CD4-positive, alpha-beta T cell (primary cell): ENCODE measurements at regions of chr19 and their contacts with region 1.

Region 1: DNA sequence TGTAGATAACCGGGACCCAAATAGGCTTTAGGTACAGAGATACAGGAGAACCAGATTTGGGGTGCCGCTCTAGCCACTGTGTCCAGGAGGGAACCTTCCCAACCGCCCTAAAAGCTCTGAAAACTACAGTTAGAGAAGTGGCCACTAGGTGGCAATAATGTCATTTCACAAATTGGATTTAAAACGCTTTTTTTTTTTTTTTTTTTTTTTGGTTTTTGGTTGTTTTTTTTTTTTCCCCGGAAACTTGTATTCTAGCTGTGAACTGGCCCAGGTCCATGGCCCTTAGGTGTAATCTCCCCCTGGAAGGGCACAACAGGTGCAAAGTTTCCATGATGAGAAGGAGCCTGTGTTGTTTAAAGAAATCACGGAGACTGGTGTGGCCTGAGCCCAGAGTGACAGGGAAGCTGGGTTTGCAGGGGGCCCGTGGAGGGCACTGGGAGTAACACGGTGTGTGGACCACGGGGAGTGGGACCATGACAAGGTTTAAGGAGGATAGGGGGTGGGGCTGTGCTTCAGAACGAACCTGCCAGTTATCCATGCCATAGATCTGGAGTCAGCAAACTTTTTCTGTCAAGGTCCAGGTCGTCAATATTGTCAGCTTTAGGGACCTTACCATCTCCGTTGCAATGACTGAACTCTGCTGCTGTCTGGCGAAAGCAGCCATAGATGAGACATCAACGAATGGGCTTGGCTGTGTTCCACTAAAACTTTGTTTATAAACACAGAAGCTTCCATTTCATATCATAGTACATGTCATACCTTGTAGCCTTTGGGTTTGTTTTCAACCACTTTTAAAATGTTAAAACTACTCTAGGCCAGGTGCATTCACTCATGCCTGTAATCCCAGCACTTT is 10.1 kb downstream of the OR1I1 start:
- DNase-seq: peak in 13 of 14 experiments; percentile 9 to 86 (median 37)
- ATAC-seq: peak; percentile 73
- H3K4me3 ChIP-seq: no peak overlapping the region
- H3K4me3 Mint-ChIP-seq: peak overlapping the region; percentile 13
- H3K27ac ChIP-seq: no peak overlapping the region
- H3K27ac Mint-ChIP-seq: peak overlapping the region; percentile 56
- H3K4me1 ChIP-seq: peaks cover 8% of the 10 kb centered on the region
- H3K4me1 Mint-ChIP-seq: peaks cover 8% of the 10 kb centered on the region
- H3K27me3 ChIP-seq: peaks cover 0 to 13% of the 10 kb centered on the region in 2 experiments
- H3K27me3 Mint-ChIP-seq: peaks cover 10% of the 10 kb centered on the region
- CTCF ChIP-seq: peak; percentile 78

Region 2: DNA sequence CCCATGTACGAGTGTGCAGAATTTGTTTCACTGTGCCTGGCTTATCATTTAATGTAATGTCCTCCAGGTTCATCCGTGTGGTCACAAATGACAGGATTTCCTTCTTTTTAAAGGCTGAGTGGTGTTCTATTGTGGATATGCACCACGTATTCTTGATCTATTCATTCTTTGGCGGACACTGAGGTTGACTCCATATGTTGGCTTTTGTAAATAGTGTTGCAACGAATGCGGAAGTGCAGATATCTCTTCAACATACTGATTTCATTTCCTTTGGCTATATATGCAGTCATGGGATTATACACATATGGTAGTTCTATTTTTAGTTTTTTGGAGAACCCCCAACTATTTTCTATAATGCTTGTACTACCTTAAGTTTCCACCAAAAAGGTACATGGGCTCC is 270.2 kb before region 1 on chr19:
- CTCF ChIA-PET with region 1: no interaction called
- POLR2A ChIA-PET with region 1: no interaction called
- intact Hi-C with region 1: no loop called
- DNase-seq: no peak
- ATAC-seq: no peak
- H3K4me3 ChIP-seq: no peak overlapping the region
- H3K4me3 Mint-ChIP-seq: no peak overlapping the region
- H3K27ac ChIP-seq: no peak overlapping the region
- H3K27ac Mint-ChIP-seq: no peak overlapping the region
- H3K4me1 ChIP-seq: no peaks in the 10 kb centered on the region
- H3K4me1 Mint-ChIP-seq: no peaks in the 10 kb centered on the region
- H3K27me3 ChIP-seq: peaks cover 7 to 18% of the 10 kb centered on the region in 2 experiments
- H3K27me3 Mint-ChIP-seq: peaks cover 55% of the 10 kb centered on the region
- CTCF ChIP-seq: no peak

Region 3: DNA sequence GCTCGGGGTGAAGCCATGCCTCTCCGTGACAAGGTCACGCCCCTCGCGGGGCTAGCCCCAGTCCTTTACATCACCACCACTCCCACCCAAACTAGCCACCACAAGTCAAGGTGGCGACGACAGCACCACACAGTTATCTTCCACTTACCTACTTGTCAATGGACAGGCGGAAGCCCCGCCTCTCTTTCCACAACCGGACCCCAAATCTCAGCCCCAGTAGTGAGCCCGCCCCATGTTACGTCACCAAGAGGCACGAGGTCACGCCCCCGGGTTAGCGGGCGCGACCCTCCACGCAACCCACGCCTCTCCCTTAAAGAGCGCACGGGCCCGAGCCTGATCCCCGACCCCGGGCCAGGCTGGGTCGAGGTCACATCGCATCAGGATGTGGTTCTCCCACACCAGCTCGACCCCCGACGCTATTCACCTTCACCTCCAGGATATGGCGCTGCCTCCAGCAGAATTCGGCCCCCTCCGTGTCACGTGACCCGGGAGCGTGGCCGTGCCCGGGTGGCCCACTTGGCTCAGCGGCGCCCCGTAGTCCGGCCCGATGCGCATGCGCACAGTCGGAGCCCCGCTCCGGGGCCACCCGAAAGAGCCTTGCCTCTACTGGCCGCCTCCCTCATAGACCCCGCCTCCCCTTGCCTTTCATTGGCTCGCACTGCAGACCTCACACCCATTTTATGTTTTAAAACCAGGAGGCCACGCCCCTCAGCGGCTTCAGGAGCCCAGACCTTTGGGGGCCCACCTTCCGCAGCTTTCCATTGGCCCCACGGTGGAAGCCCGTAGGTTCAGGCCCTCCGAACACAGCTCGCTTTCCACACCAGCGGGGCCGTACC is 33.3 kb after region 1 on chr19:
- CTCF ChIA-PET with region 1: interaction called, 8 read pairs
- POLR2A ChIA-PET with region 1: no interaction called
- intact Hi-C with region 1: loop called in 1 of 2 experiments (anchors 1 kb)
- DNase-seq: peak; percentile 92 to 98 (median 96)
- ATAC-seq: peak; percentile 85
- H3K4me3 ChIP-seq: peak overlapping the region; percentile 77
- H3K4me3 Mint-ChIP-seq: peak overlapping the region; percentile 99
- H3K27ac ChIP-seq: peak overlapping the region; percentile 87 to 97
- H3K27ac Mint-ChIP-seq: peak overlapping the region; percentile 96
- H3K4me1 ChIP-seq: peaks cover 32% of the 10 kb centered on the region
- H3K4me1 Mint-ChIP-seq: peaks cover 49% of the 10 kb centered on the region
- H3K27me3 ChIP-seq: no peaks in the 10 kb centered on the region
- H3K27me3 Mint-ChIP-seq: no peaks in the 10 kb centered on the region
- CTCF ChIP-seq: no peak

Region 4: DNA sequence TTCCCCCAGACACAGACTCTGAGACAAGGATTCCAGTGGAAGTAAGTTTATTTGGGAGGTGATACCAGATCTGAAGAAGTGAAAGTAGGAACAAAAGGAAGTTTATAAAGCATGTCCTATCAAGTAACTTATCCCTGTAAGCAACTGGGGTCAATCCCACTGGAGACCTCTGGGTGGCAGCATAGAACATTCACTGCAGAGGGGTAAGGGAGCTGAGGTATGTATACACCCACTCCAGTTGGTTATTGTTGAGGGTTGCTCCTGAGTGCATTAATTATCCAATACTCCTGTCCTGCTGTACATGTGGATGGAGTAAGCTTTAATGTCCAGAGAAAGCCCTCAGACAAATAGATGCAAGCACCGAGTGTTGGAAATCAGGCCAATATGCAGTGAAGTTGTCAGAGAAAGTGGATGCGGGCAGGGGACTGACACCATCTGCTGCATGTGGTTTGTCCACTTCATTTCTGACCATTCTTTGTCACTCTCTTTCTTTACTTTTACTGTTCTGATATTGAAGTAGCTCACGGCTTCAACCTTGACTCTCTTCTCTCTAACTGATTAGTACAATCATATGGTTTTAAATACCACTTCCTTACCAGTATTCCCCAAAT is 62.0 kb after region 1 on chr19:
- CTCF ChIA-PET with region 1: interaction called, 13 read pairs
- POLR2A ChIA-PET with region 1: no interaction called
- intact Hi-C with region 1: loop called (anchors 1 kb)
- DNase-seq: peak in 7 of 14 experiments; percentile 12 to 47 (median 33)
- ATAC-seq: peak; percentile 52
- H3K4me3 ChIP-seq: no peak overlapping the region
- H3K4me3 Mint-ChIP-seq: no peak overlapping the region
- H3K27ac ChIP-seq: no peak overlapping the region
- H3K27ac Mint-ChIP-seq: no peak overlapping the region
- H3K4me1 ChIP-seq: no peaks in the 10 kb centered on the region
- H3K4me1 Mint-ChIP-seq: peaks cover 6% of the 10 kb centered on the region
- H3K27me3 ChIP-seq: peaks cover 0 to 5% of the 10 kb centered on the region in 2 experiments
- H3K27me3 Mint-ChIP-seq: peaks cover 17% of the 10 kb centered on the region
- CTCF ChIP-seq: peak; percentile 47

Region 5: DNA sequence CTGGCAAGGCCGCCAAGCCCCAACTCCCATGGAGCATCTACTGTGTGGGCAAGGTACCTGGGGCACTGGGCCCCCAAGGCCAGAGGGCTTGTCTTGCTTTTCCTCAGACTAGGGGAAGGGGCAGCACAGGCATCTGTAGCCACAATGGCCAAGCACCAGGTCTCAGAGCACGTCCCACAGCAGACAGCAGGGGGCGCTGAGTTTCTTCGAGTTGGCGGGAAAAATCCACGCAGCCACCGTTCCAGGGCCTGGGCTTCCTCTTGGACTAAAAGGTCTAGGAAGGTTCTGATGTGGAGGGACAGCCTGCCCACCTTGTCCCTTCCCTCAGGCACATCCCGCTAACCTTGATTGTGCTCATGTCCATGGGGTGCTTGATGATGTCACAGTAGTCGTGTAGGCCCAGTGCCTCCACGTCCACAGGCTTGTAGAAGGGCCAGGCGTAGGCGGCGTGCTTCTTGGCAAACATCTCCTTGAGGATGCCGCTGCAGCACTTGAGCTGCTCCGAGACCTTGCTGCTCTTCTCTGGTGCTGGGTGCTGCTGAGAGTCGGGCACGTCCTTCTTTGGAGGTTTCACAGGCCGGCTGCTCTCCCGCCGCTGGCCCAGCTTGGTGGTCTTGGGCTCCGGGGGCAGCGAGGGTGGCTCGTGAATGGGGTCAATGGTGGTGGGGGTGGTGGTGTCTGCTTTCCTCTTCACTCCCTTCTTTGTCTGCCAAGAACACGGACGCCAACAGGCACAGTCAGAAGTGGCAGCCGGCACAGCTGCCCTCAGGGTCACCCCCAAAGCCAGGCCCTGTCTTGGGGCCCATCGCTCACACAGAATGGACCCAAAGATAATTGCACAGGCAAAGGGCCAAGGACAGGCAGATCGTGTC is 172.2 kb after region 1 on chr19:
- CTCF ChIA-PET with region 1: no interaction called
- POLR2A ChIA-PET with region 1: no interaction called
- intact Hi-C with region 1: loop called in 1 of 2 experiments (anchors 10 kb)
- DNase-seq: peak; percentile 58 to 82 (median 66)
- ATAC-seq: peak; percentile 80
- H3K4me3 ChIP-seq: no peak overlapping the region
- H3K4me3 Mint-ChIP-seq: no peak overlapping the region
- H3K27ac ChIP-seq: no peak overlapping the region
- H3K27ac Mint-ChIP-seq: no peak overlapping the region
- H3K4me1 ChIP-seq: no peaks in the 10 kb centered on the region
- H3K4me1 Mint-ChIP-seq: peaks cover 13% of the 10 kb centered on the region
- H3K27me3 ChIP-seq: no peaks in the 10 kb centered on the region
- H3K27me3 Mint-ChIP-seq: no peaks in the 10 kb centered on the region
- CTCF ChIP-seq: peak; percentile 75